PC-3 (cell line): ENCODE measurements at regions of chr10 and their contacts with region 1.

Region 1: DNA sequence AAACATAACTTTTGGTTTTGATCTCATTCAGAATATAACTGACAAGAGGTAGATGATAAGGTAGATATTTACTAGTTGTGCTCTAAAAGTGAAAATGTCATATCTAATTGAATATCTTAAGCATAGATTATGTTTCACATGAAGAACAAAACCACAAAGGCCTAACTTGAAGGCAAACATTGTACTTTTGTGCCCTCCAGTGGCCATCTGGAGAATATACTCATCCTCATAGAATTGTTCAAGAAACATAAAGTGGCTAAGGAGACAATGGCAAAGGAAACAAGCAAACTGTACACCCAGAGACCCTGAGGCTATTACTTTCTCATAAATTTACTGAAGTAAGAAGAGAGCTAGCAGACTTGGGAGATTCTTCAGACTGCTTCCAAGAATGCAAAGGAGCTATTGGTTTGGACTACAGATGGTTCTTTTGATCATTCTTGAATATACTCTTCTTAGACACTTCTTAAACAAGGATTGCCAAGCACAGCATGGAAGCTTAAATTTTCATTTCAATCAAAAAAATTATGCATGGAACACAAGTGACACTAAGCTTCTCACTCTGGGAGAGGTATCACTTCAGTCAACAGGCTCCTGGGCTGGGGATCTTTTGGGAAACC is 98.2 kb upstream of the DKK1 start:
- DNase-seq: peak; percentile 96
- ATAC-seq: peak; percentile 58
- H3K4me3 ChIP-seq: no peak overlapping the region
- H3K27ac ChIP-seq: peak overlapping the region; percentile 65
- H3K4me1 ChIP-seq: peaks cover 24% of the 10 kb centered on the region
- H3K27me3 ChIP-seq: no peaks in the 10 kb centered on the region
- CTCF ChIP-seq: peak; percentile 99

Region 2: GRCh38 chr10:51063659-51064535 is 1152.0 kb before region 1 on chr10:
- CTCF ChIA-PET with region 1: no interaction called
- POLR2A ChIA-PET with region 1: no interaction called
- intact Hi-C with region 1: loop called (anchors 1 kb)
- DNase-seq: peak; percentile 99
- ATAC-seq: peak; percentile 100
- H3K4me3 ChIP-seq: no peak overlapping the region
- H3K27ac ChIP-seq: no peak overlapping the region
- H3K4me1 ChIP-seq: no peaks in the 10 kb centered on the region
- H3K27me3 ChIP-seq: peaks cover 8% of the 10 kb centered on the region
- CTCF ChIP-seq: peak; percentile 100

Region 3: DNA sequence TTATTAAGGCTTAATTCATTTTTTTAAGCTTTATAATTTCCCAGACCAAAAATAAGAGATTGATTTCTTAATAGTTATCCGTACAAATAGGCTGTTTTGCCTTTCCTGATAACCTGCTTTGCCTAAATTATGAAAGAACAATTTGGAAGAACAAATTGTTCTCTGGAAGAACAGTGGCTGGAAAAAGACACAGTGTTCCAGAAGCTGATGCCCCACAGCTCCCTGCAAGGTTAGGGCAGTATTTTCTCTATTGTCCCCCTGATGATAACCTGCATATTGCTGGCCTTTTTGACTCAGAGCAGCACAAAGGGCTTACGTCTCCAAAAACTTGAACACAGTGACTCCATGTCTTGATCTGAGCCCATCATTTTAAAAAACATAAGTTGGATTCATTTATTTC is 667.9 kb before region 1 on chr10:
- CTCF ChIA-PET with region 1: no interaction called
- POLR2A ChIA-PET with region 1: no interaction called
- intact Hi-C with region 1: loop called (anchors 10 kb)
- DNase-seq: no peak
- ATAC-seq: no peak
- H3K4me3 ChIP-seq: no peak overlapping the region
- H3K27ac ChIP-seq: no peak overlapping the region
- H3K4me1 ChIP-seq: peaks cover 8% of the 10 kb centered on the region
- H3K27me3 ChIP-seq: no peaks in the 10 kb centered on the region
- CTCF ChIP-seq: no peak

Region 4: GRCh38 chr10:51892965-51893658 is 322.7 kb before region 1 on chr10:
- CTCF ChIA-PET with region 1: no interaction called
- POLR2A ChIA-PET with region 1: no interaction called
- intact Hi-C with region 1: loop called (anchors 5 kb)
- DNase-seq: peak; percentile 85
- ATAC-seq: peak; percentile 93
- H3K4me3 ChIP-seq: no peak overlapping the region
- H3K27ac ChIP-seq: no peak overlapping the region
- H3K4me1 ChIP-seq: no peaks in the 10 kb centered on the region
- H3K27me3 ChIP-seq: no peaks in the 10 kb centered on the region
- CTCF ChIP-seq: peak; percentile 98

Region 5: GRCh38 chr10:52056296-52056695 is 159.6 kb before region 1 on chr10:
- CTCF ChIA-PET with region 1: no interaction called
- POLR2A ChIA-PET with region 1: no interaction called
- intact Hi-C with region 1: loop called (anchors 1 kb)
- DNase-seq: peak; percentile 98
- ATAC-seq: peak; percentile 82
- H3K4me3 ChIP-seq: no peak overlapping the region
- H3K27ac ChIP-seq: no peak overlapping the region
- H3K4me1 ChIP-seq: peaks cover 19% of the 10 kb centered on the region
- H3K27me3 ChIP-seq: no peaks in the 10 kb centered on the region
- CTCF ChIP-seq: no peak

Region 6: DNA sequence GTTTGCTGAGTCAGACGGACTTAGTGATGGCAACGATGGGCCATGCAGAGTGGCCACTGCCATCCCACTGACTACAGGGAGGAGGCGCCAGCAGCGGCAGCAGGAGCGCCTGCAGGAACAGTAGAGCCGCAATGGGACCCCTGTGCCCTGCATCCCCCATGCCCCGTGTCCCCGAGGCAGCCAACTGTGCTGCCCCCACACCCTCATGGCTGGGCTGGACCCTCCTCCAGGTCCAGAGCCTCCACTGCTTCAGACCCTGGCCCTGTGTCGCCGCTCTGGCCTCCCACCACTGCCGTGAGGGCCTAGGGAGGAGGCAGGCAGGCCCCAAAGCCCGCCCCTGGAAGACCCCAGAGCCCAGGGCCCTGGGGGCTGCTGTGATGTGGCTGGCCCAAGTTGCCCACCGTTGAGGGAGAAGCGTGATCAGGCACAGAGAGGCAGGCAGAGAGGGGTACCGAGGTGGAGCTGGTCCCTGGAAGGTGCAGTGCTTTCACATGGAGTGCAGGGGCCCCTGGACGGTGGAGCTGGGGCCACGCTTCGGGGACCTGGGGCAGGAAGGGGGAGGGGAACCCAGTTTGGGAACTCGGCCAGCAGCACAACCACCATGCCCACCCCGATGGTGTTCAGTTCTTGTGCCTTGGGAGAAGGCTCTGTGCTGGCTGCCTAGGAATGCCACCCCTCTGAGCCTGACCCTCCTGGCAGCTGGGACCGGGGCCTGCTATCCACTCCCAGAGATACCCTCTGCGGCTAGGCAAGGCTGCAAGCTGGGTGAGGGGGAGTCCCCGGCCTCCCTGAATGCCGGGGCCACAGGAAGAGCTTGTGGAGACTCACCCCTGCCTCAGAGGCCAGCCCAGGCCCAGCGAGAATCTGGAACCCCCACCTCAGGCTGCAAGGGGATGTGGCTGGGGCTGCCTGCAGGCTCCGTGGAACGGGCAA is 130.8 kb after region 1 on chr10:
- CTCF ChIA-PET with region 1: no interaction called
- POLR2A ChIA-PET with region 1: no interaction called
- intact Hi-C with region 1: no loop called
- DNase-seq: no peak
- ATAC-seq: no peak
- H3K4me3 ChIP-seq: no peak overlapping the region
- H3K27ac ChIP-seq: no peak overlapping the region
- H3K4me1 ChIP-seq: peaks cover 5% of the 10 kb centered on the region
- H3K27me3 ChIP-seq: no peaks in the 10 kb centered on the region
- CTCF ChIP-seq: peak; percentile 31; the same call in 1 of the 2 replicates